ENCODE measurements at regions of chr17 and their contacts with region 1.

Region 1: DNA sequence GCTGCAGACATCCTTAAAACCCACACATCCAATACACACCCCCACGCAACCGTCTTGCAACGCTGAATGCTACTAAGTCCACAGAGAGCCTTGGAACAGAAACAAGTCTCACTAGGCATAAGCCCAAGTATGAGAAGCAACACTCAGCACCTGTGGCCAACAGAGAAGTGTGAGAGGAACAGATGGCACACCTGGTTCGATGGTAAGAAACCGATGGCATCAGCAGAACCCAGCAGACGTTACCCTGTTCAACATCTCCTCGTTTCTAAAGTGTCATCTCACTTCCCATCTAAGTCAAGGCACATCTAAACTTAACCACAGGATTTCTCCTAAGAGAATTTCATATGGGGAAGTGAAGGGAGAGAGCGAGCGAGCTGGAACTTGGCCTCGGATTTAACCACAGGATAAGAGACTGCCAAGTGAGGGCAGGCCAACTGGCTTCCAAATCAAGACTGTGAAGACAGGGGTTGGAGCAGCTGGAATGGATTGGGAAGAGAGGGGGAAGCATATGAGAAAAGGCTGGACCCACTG is 41.0 kb downstream of the NXPH3 start:
- DNase-seq: no peak
- H3K4me3 ChIP-seq: no peak overlapping the region
- H3K27ac ChIP-seq: peak overlapping the region; percentile 33 to 76 (median 56)
- H3K4me1 ChIP-seq: peaks cover 0 to 44% (median 18%) of the 10 kb centered on the region in 3 donors
- H3K27me3 ChIP-seq: no peaks in the 10 kb centered on the region
- CTCF ChIP-seq: no peak
- POLR2A ChIP-seq: no peak

Region 2: GRCh38 chr17:49472527-49472926 is 144.1 kb before region 1 on chr17:
- intact Hi-C with region 1: no loop called
- DNase-seq: no peak
- H3K4me3 ChIP-seq: no peak overlapping the region
- H3K27ac ChIP-seq: no peak overlapping the region
- H3K4me1 ChIP-seq: peaks cover 5 to 23% (median 7%) of the 10 kb centered on the region in 3 donors
- H3K27me3 ChIP-seq: peaks cover 3 to 99% (median 7%) of the 10 kb centered on the region in 4 donors
- CTCF ChIP-seq: no peak
- POLR2A ChIP-seq: no peak

Region 3: GRCh38 chr17:49523706-49524472 is 92.8 kb before region 1 on chr17:
- intact Hi-C with region 1: no loop called
- DNase-seq: no peak
- H3K4me3 ChIP-seq: no peak overlapping the region
- H3K27ac ChIP-seq: no peak overlapping the region
- H3K4me1 ChIP-seq: peaks cover 0 to 20% (median 6%) of the 10 kb centered on the region in 3 donors
- H3K27me3 ChIP-seq: peaks cover 0 to 69% (median 0%) of the 10 kb centered on the region in 4 donors
- CTCF ChIP-seq: no peak
- POLR2A ChIP-seq: no peak

Region 4: GRCh38 chr17:49677933-49678847 is 61.5 kb after region 1 on chr17 and contains the start of gene SPOP:
- intact Hi-C with region 1: loop called (anchors 10 kb)
- DNase-seq: peak; percentile 99
- H3K4me3 ChIP-seq: peak within 1 kb of the TSS; percentile 59 to 79 (median 78)
- H3K27ac ChIP-seq: peak within 1 kb of the TSS; percentile 93 to 99 (median 98)
- H3K4me1 ChIP-seq: peaks cover 0 to 44% (median 30%) of the 10 kb centered on the region in 3 donors
- H3K27me3 ChIP-seq: no peaks in the 10 kb centered on the region
- CTCF ChIP-seq: no peak
- POLR2A ChIP-seq: peak in 3 of 4 donors; percentile 35 to 48 (median 41)
- total RNA-seq, gene SPOP: 18.1 to 67.5 (median 36.5) TPM

Region 5: DNA sequence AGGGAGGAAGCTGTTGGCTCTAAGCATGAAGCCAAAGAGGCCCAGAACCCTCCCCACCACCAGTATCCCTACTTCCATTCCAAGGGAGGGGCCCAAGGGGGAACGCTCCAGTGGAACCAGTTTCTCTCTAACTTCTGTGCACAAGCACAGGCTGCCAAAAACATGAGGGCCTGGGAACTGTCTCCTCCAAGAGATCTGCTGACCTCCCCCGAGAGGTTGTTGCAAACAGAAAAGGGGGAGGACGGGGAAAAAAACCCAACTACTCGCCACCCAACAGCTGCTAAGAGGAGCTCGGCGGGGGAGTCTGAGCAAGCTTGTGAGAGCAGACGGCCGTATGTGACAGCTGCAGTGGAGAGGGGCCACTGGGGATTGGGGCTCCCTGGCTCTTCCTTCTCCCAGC is 106.8 kb after region 1 on chr17:
- intact Hi-C with region 1: no loop called
- DNase-seq: no peak
- H3K4me3 ChIP-seq: peak overlapping the region in 1 of 4 donors; percentile 29
- H3K27ac ChIP-seq: peak overlapping the region; percentile 2 to 72 (median 58)
- H3K4me1 ChIP-seq: peaks cover 9 to 49% (median 15%) of the 10 kb centered on the region in 3 donors
- H3K27me3 ChIP-seq: no peaks in the 10 kb centered on the region
- CTCF ChIP-seq: no peak
- POLR2A ChIP-seq: no peak